PC-9 (cell line): ENCODE measurements at regions of chr5 and their contacts with region 1.

Region 1: GRCh38 chr5:142826741-142827732 is 56.9 kb downstream of the ARHGAP26 start:
- DNase-seq: peak; percentile 70 to 90
- H3K4me3 ChIP-seq: peak overlapping the region; percentile 13; the same call in 1 of the 2 replicates
- H3K27ac ChIP-seq: peak overlapping the region; percentile 82
- H3K4me1 ChIP-seq: peaks cover 74% of the 10 kb centered on the region
- H3K27me3 ChIP-seq: no peaks in the 10 kb centered on the region
- CTCF ChIP-seq: no peak

Region 2: GRCh38 chr5:141605523-141606277 is 1221.3 kb before region 1 on chr5:
- CTCF ChIA-PET with region 1: no interaction called
- POLR2A ChIA-PET with region 1: interaction called, 10 read pairs
- intact Hi-C with region 1: no loop called
- DNase-seq: no peak
- H3K4me3 ChIP-seq: no peak overlapping the region
- H3K27ac ChIP-seq: peak overlapping the region; percentile 70
- H3K4me1 ChIP-seq: peaks cover 24% of the 10 kb centered on the region
- H3K27me3 ChIP-seq: no peaks in the 10 kb centered on the region
- CTCF ChIP-seq: no peak

Region 3: DNA sequence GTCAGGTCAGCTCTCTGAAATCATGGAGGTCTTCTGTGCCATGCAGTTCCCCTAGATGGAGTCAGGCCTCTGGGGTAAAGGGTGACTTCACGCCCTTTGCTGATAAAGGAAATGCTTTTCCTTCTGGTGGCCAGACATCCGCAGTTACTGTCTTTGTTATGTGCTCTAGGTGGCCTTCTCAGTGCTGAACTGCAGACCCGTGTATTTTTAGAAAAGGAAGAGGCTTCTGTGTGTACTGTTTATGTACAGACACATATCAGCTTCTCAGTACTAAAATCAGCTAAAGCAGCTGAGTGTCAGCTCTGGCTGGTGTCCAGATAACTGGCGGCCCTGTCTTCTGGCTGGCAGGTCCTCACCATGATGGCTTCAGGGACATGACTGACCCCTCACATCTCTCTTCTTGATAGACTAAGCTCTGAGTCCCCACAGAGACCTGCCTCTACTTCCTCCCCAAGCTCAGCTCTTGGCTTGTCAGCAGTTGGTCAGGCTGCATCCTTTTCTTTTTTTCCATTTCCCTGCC is 18.4 kb after region 1 on chr5:
- CTCF ChIA-PET with region 1: interaction called, 3 read pairs
- POLR2A ChIA-PET with region 1: interaction called, 4 read pairs
- intact Hi-C with region 1: loop called (anchors 2 kb)
- DNase-seq: no peak
- H3K4me3 ChIP-seq: no peak overlapping the region
- H3K27ac ChIP-seq: peak overlapping the region; percentile 90
- H3K4me1 ChIP-seq: peaks cover 32% of the 10 kb centered on the region
- H3K27me3 ChIP-seq: no peaks in the 10 kb centered on the region
- CTCF ChIP-seq: no peak

Region 4: DNA sequence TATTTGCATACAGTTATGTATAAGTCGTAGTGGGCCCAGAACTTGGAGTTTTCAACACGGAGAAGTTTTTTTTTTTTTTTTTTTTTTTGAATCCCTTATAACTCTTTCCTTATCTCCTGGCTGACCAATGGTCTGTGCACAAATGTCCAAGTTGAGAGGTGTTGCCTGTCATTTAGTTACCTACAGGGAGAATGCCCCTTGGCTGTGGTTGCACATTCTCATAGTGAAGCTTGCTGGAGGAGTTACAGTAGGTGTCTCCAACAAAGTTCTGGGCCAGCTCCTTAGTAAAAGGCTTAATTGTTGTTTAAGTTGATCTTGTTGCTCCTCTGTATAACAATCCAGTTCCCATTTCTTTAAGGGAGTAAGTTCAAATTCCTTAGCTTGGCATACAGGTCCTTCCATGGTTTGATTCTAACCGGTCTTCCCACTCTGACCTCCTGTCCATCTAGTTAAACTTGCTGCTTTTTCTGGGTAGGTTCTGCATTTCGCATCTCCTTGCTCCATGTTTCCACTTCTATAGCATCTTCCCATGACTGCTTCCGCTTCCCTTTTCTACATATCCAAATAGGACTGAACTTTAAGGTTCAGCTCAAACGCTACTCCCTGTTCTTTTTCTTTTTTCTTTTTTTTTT is 38.5 kb after region 1 on chr5:
- CTCF ChIA-PET with region 1: no interaction called
- POLR2A ChIA-PET with region 1: no interaction called
- intact Hi-C with region 1: loop called (anchors 2 kb)
- DNase-seq: no peak
- H3K4me3 ChIP-seq: no peak overlapping the region
- H3K27ac ChIP-seq: no peak overlapping the region
- H3K4me1 ChIP-seq: peaks cover 31% of the 10 kb centered on the region
- H3K27me3 ChIP-seq: no peaks in the 10 kb centered on the region
- CTCF ChIP-seq: no peak

Region 5: DNA sequence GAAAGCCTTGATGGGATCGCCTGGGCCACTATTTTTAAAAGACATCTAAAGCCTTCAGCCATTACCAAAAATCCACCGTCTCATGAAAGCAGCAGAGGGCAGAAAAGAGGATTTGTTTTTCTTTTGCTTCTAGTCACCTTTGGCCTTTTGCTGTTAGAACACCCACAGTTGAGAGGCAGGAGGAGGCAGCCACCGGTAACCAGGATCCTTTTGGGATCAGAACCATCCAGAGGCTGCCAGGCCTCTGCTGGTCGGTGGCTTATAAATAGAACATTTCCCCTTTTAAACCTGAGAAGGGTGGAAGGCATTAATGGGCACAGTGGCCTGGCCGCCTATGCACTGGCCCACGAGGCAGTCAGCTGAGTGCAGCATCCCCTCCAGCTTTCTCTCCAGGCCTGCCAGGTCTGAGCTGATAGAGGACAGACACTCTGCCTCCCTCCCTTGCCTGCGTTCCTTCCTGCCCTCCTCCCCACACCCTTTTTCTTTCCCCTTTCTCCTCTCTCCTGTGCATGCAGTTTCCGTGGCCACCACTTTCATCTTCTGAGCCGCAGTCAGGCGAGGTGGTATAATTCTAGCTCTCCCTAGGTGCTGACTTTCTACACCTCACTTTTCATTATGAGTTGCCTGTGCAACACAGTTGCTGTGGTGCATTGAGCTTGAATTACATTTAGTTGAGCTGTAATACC is 196.5 kb after region 1 on chr5:
- CTCF ChIA-PET with region 1: no interaction called
- POLR2A ChIA-PET with region 1: no interaction called
- intact Hi-C with region 1: no loop called
- DNase-seq: no peak
- H3K4me3 ChIP-seq: no peak overlapping the region
- H3K27ac ChIP-seq: no peak overlapping the region
- H3K4me1 ChIP-seq: no peaks in the 10 kb centered on the region
- H3K27me3 ChIP-seq: no peaks in the 10 kb centered on the region
- CTCF ChIP-seq: no peak